SK-N-SH (cell line): ENCODE measurements at regions of chr7 and their contacts with region 1.

Region 1: GRCh38 chr7:141220263-141220880 is 146.5 kb downstream of the TMEM178B start:
- DNase-seq: peak; percentile 86
- H3K4me3 ChIP-seq: peak overlapping the region in 1 of 2 experiments; percentile 47; a peak in 1 of 4 replicates
- H3K27ac ChIP-seq: no peak overlapping the region
- H3K4me1 ChIP-seq: peaks cover 0 to 22% of the 10 kb centered on the region in 2 experiments; a peak in 1 of 4 replicates
- H3K27me3 ChIP-seq: no peaks in the 10 kb centered on the region
- CTCF ChIP-seq: no peak
- EP300 ChIP-seq: no peak
- RAD21 ChIP-seq: peak; percentile 90

Region 2: GRCh38 chr7:141014524-141015395 is 205.6 kb before region 1 on chr7 and contains the start of gene MRPS33:
- CTCF ChIA-PET with region 1: interaction called, 45 read pairs
- POLR2A ChIA-PET with region 1: interaction called, 3 read pairs
- DNase-seq: peak; percentile 96
- H3K4me3 ChIP-seq: peak within 1 kb of the TSS; percentile 72 to 96
- H3K27ac ChIP-seq: peak within 1 kb of the TSS; percentile 78 to 93
- H3K4me1 ChIP-seq: peaks cover 6 to 16% of the 10 kb centered on the region in 2 experiments; a peak in 3 of 4 replicates
- H3K27me3 ChIP-seq: no peaks in the 10 kb centered on the region
- CTCF ChIP-seq: peak; percentile 86
- EP300 ChIP-seq: no peak; a peak in 2 of 4 replicates
- RAD21 ChIP-seq: no peak; the same call in 1 of the 2 replicates
- polyA plus RNA-seq, gene MRPS33: 88.8 and 95.5 TPM in 2 replicates

Region 3: DNA sequence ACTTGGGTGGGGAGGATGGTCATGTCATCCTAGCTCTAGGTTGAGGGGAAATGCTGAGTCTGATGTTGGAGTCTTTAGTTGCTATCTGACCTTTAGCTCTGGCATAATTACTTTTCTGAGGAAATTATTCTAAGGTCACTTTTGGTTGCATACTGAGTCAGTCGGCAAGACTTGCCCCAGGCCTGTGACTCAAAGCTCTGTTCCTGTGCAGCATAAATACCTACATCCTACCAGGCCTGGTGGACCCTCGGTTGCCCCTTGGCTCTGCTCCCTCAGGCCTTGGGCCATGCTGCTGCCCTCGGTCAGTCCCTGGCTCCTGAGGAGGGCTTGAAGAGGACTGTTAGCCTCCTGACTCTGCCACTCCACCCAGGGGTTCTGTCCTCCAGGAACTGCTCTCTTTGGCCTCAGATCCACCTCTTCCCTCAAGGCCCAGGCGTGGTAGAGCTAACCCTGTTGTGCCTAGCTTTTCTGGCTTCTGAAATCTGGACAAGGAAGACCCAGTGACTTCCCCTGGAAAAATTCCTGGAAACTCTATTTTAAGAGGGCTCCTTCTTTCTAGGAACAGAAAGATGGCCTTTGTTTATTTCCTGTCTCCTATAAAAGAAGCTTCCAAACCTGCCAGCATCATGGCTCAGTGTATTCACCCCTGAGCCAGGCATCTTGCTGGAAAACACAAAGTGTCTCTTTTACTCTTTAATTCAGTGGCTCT is 75.3 kb before region 1 on chr7:
- CTCF ChIA-PET with region 1: interaction called, 10 read pairs
- POLR2A ChIA-PET with region 1: interaction called, 3 read pairs
- DNase-seq: peak; percentile 40
- H3K4me3 ChIP-seq: no peak overlapping the region
- H3K27ac ChIP-seq: peak overlapping the region in 1 of 2 experiments; percentile 89; a peak in 2 of 4 replicates
- H3K4me1 ChIP-seq: peaks cover 0 to 29% of the 10 kb centered on the region in 2 experiments; a peak in 1 of 4 replicates
- H3K27me3 ChIP-seq: no peaks in the 10 kb centered on the region
- CTCF ChIP-seq: no peak
- EP300 ChIP-seq: no peak
- RAD21 ChIP-seq: no peak

Region 4: GRCh38 chr7:141208539-141208938 is 11.8 kb before region 1 on chr7:
- CTCF ChIA-PET with region 1: interaction called, 10 read pairs
- POLR2A ChIA-PET with region 1: interaction called, 3 read pairs
- DNase-seq: no peak
- H3K4me3 ChIP-seq: no peak overlapping the region
- H3K27ac ChIP-seq: no peak overlapping the region
- H3K4me1 ChIP-seq: peaks cover 0 to 11% of the 10 kb centered on the region in 2 experiments; a peak in 1 of 4 replicates
- H3K27me3 ChIP-seq: no peaks in the 10 kb centered on the region
- CTCF ChIP-seq: no peak
- EP300 ChIP-seq: no peak
- RAD21 ChIP-seq: no peak

Region 5: DNA sequence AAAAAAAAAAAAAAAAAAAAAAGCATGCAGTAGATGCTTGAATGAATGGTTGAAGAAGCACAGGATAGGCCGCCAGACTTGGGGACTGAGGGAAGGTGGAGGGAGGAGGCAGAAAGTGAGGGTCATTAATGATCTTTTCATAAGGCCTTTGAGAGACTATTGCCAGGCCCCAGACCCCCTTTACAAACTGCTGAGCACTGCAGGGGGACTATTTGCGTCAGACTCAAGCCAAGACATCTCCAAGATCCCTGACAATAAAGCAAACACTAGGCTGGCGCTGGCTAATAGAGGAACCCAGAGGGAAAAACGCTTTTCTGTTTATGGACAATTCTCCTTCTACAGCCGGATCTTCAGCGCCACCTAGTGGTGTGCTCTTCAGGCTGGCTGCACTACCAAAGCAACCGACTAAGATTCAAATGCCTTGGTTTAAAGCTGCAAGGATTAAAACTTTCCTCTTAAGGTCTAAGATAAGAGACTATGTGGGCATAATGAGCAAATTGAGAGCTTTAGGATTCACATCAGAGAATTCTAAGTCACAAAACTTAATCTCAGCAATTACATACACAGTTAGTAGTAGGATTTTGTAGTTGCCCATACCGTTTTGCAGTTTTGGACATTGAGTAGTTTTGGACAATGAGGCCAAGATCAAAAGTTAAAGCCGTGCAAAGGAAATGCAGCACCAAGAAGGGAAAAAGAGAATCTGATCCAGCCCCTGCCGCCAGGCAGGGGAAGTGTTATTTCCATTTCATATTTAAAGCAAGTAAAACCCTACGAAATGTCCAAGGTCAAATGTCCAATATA is 313.0 kb after region 1 on chr7:
- CTCF ChIA-PET with region 1: interaction called, 27 read pairs
- POLR2A ChIA-PET with region 1: no interaction called
- DNase-seq: peak; percentile 77
- H3K4me3 ChIP-seq: no peak overlapping the region; a peak in 1 of 4 replicates
- H3K27ac ChIP-seq: no peak overlapping the region
- H3K4me1 ChIP-seq: peaks cover 0 to 2% of the 10 kb centered on the region in 2 experiments; a peak in 1 of 4 replicates
- H3K27me3 ChIP-seq: no peaks in the 10 kb centered on the region; the same call in 1 of the 2 replicates
- CTCF ChIP-seq: peak; percentile 100
- EP300 ChIP-seq: no peak
- RAD21 ChIP-seq: peak; percentile 98

Region 6: GRCh38 chr7:141737834-141738591 is 517.6 kb after region 1 on chr7 and contains the start of gene SSBP1:
- CTCF ChIA-PET with region 1: no interaction called
- POLR2A ChIA-PET with region 1: no interaction called
- DNase-seq: peak; percentile 88
- H3K4me3 ChIP-seq: peak within 1 kb of the TSS; percentile 94 to 95
- H3K27ac ChIP-seq: peak within 1 kb of the TSS; percentile 69 to 93
- H3K4me1 ChIP-seq: peaks cover 6 to 26% of the 10 kb centered on the region in 2 experiments; a peak in 2 of 4 replicates
- H3K27me3 ChIP-seq: no peaks in the 10 kb centered on the region
- CTCF ChIP-seq: peak; percentile 99
- EP300 ChIP-seq: peak in 1 of 2 experiments; percentile 59; a peak in 2 of 4 replicates
- RAD21 ChIP-seq: peak; percentile 61
- polyA plus RNA-seq, gene SSBP1: 191 and 212 TPM in 2 replicates